ENCODE measurements at regions of chr5 and their contacts with region 1.

Region 1: GRCh38 chr5:56861893-56862485 is 46.6 kb downstream of the MAP3K1 start:
- DNase-seq: no peak
- ATAC-seq: no peak
- H3K4me3 ChIP-seq: no peak overlapping the region
- H3K27ac ChIP-seq: no peak overlapping the region
- H3K4me1 ChIP-seq: no peaks in the 10 kb centered on the region
- H3K27me3 ChIP-seq: no peaks in the 10 kb centered on the region
- CTCF ChIP-seq: no peak

Region 2: GRCh38 chr5:56922922-56923321 is 60.9 kb after region 1 on chr5:
- CTCF ChIA-PET with region 1: no interaction called
- POLR2A ChIA-PET with region 1: interaction called, 15 read pairs
- in situ Hi-C with region 1: no loop called
- intact Hi-C with region 1: no loop called
- DNase-seq: no peak
- ATAC-seq: no peak
- H3K4me3 ChIP-seq: no peak overlapping the region
- H3K27ac ChIP-seq: no peak overlapping the region
- H3K4me1 ChIP-seq: no peaks in the 10 kb centered on the region
- H3K27me3 ChIP-seq: no peaks in the 10 kb centered on the region
- CTCF ChIP-seq: no peak

Measured in Panc1 (cell line).